Activated CD4-positive, alpha-beta memory T cell treated with anti-CD3 and anti-CD28 coated beads, Interleukin-2, amount 10 ng/mL, durations not matched to agents 7 days and 5 days (primary cell): ENCODE measurements at regions of chr17 and their contacts with region 1.

Region 1: GRCh38 chr17:82863941-82864774 is 24.3 kb upstream of the ZNF750 start:
- DNase-seq: peak; percentile 93
- H3K4me3 Mint-ChIP-seq: peak overlapping the region; percentile 62
- H3K27ac Mint-ChIP-seq: peak overlapping the region; percentile 95
- H3K4me1 Mint-ChIP-seq: peaks cover 69% of the 10 kb centered on the region
- H3K27me3 Mint-ChIP-seq: no peaks in the 10 kb centered on the region

Region 2: GRCh38 chr17:82767041-82767754 is 97.0 kb before region 1 on chr17:
- CTCF ChIA-PET with region 1: no interaction called
- POLR2A ChIA-PET with region 1: no interaction called
- DNase-seq: peak; percentile 39
- H3K4me3 Mint-ChIP-seq: no peak overlapping the region
- H3K27ac Mint-ChIP-seq: no peak overlapping the region
- H3K4me1 Mint-ChIP-seq: peaks cover 9% of the 10 kb centered on the region
- H3K27me3 Mint-ChIP-seq: no peaks in the 10 kb centered on the region

Region 3: DNA sequence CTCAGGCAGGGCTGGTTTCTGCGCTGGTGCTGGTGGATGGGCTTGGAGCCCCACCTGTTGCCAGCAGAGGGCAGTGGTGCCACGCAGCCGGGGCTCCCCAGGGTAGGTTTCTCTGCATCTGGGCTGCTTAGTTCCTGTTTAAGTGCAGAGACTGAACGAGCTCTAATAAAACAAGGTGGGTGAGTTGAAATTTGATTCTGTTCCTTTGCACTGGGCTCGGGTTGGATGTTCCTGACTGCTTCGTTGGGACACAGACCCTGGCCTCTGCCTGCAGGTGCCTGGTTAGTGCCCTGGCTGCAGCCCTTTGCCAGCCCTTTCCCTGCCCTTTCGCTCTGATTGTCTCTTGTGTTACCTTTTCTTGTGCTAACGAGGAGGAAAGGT is 82.3 kb before region 1 on chr17:
- CTCF ChIA-PET with region 1: interaction called, 15 read pairs
- POLR2A ChIA-PET with region 1: interaction called, 4 read pairs
- DNase-seq: peak; percentile 89
- H3K4me3 Mint-ChIP-seq: no peak overlapping the region
- H3K27ac Mint-ChIP-seq: peak overlapping the region; percentile 12
- H3K4me1 Mint-ChIP-seq: peaks cover 12% of the 10 kb centered on the region
- H3K27me3 Mint-ChIP-seq: no peaks in the 10 kb centered on the region

Region 4: GRCh38 chr17:82876602-82877379 is 12.6 kb after region 1 on chr17:
- CTCF ChIA-PET with region 1: interaction called, 14 read pairs
- POLR2A ChIA-PET with region 1: interaction called, 48 read pairs
- DNase-seq: no peak
- H3K4me3 Mint-ChIP-seq: no peak overlapping the region
- H3K27ac Mint-ChIP-seq: no peak overlapping the region
- H3K4me1 Mint-ChIP-seq: peaks cover 45% of the 10 kb centered on the region
- H3K27me3 Mint-ChIP-seq: no peaks in the 10 kb centered on the region

Region 5: GRCh38 chr17:82881900-82882714 is 17.9 kb after region 1 on chr17:
- CTCF ChIA-PET with region 1: interaction called, 14 read pairs
- POLR2A ChIA-PET with region 1: interaction called, 48 read pairs
- DNase-seq: no peak
- H3K4me3 Mint-ChIP-seq: peak overlapping the region; percentile 72
- H3K27ac Mint-ChIP-seq: peak overlapping the region; percentile 93
- H3K4me1 Mint-ChIP-seq: peaks cover 81% of the 10 kb centered on the region
- H3K27me3 Mint-ChIP-seq: no peaks in the 10 kb centered on the region

Region 6: GRCh38 chr17:82892899-82893565 is 28.9 kb after region 1 on chr17:
- CTCF ChIA-PET with region 1: interaction called, 5 read pairs
- POLR2A ChIA-PET with region 1: interaction called, 20 read pairs
- DNase-seq: peak; percentile 83
- H3K4me3 Mint-ChIP-seq: peak overlapping the region; percentile 57
- H3K27ac Mint-ChIP-seq: peak overlapping the region; percentile 68
- H3K4me1 Mint-ChIP-seq: peaks cover 42% of the 10 kb centered on the region
- H3K27me3 Mint-ChIP-seq: no peaks in the 10 kb centered on the region

Region 7: DNA sequence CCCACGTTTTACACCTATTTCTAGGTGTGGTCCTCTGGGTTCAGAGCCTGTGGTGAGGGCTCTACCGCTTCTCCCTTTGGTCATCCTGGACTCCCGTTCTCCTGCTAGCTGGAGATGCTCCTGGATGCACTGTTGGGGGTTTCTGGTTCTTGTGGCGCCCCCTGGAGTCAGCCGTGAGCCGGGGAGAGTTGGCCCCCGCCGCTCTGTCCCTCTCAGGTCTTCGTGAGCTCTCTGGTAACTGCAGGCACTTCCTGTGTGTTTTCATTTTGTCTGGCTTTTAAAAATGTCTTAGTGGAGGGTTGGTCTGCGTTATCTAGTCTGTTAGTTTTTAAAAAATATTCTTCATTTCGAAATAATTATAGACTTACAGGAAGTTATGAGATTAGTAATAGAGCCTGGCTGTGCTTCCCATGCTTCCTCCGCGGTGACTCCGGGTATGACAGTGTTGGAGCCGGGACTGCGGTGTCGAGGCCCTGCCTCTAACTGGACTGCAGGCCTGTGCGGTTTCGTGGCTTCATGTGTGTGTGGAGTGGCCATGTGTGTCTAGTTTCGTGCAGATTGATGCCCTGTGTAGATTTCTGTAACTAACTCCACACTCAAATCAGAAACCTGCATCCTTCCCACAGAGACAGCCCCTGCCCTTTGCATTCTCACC is 53.7 kb after region 1 on chr17:
- CTCF ChIA-PET with region 1: no interaction called
- POLR2A ChIA-PET with region 1: no interaction called
- DNase-seq: peak; percentile 24
- H3K4me3 Mint-ChIP-seq: no peak overlapping the region
- H3K27ac Mint-ChIP-seq: no peak overlapping the region
- H3K4me1 Mint-ChIP-seq: peaks cover 6% of the 10 kb centered on the region
- H3K27me3 Mint-ChIP-seq: no peaks in the 10 kb centered on the region